Panc1 (cell line): ENCODE measurements at regions of chr10 and their contacts with region 1.

Region 1: GRCh38 chr10:77741746-77742145 is 104.1 kb upstream of the KCNMA1 start:
- DNase-seq: no peak
- ATAC-seq: no peak
- H3K4me3 ChIP-seq: no peak overlapping the region
- H3K27ac ChIP-seq: no peak overlapping the region
- H3K4me1 ChIP-seq: no peaks in the 10 kb centered on the region
- H3K27me3 ChIP-seq: no peaks in the 10 kb centered on the region
- CTCF ChIP-seq: no peak

Region 2: GRCh38 chr10:77400033-77400432 is 341.7 kb before region 1 on chr10:
- CTCF ChIA-PET with region 1: no interaction called
- POLR2A ChIA-PET with region 1: no interaction called
- in situ Hi-C with region 1: no loop called
- intact Hi-C with region 1: no loop called
- DNase-seq: no peak
- ATAC-seq: no peak
- H3K4me3 ChIP-seq: no peak overlapping the region
- H3K27ac ChIP-seq: no peak overlapping the region
- H3K4me1 ChIP-seq: 0 out of 2 replicates have a peak, but pooled peaks cover 20% of the 10 kb centered on the region
- H3K27me3 ChIP-seq: no peaks in the 10 kb centered on the region
- CTCF ChIP-seq: no peak

Region 3: GRCh38 chr10:77763453-77764430 is 22.0 kb after region 1 on chr10:
- CTCF ChIA-PET with region 1: no interaction called
- POLR2A ChIA-PET with region 1: interaction called, 10 read pairs
- in situ Hi-C with region 1: no loop called
- intact Hi-C with region 1: no loop called
- DNase-seq: no peak
- ATAC-seq: peak; percentile 27
- H3K4me3 ChIP-seq: no peak overlapping the region
- H3K27ac ChIP-seq: no peak overlapping the region
- H3K4me1 ChIP-seq: no peaks in the 10 kb centered on the region
- H3K27me3 ChIP-seq: no peaks in the 10 kb centered on the region
- CTCF ChIP-seq: no peak

Region 4: GRCh38 chr10:77889277-77889903 is 147.6 kb after region 1 on chr10:
- CTCF ChIA-PET with region 1: no interaction called
- POLR2A ChIA-PET with region 1: no interaction called
- in situ Hi-C with region 1: no loop called
- intact Hi-C with region 1: no loop called
- DNase-seq: no peak
- ATAC-seq: no peak
- H3K4me3 ChIP-seq: no peak overlapping the region
- H3K27ac ChIP-seq: no peak overlapping the region
- H3K4me1 ChIP-seq: peaks cover 8% of the 10 kb centered on the region; the same call in 1 of the 2 replicates
- H3K27me3 ChIP-seq: no peaks in the 10 kb centered on the region
- CTCF ChIP-seq: no peak